ENCODE measurements at regions of chr3 and their contacts with region 1.

Region 1: GRCh38 chr3:153043729-153044328 is 118.2 kb upstream of the RAP2B start:
- DNase-seq: no peak
- ATAC-seq: peak in 1 of 8 donors; percentile 55
- H3K4me3 ChIP-seq: no peak overlapping the region
- H3K27ac ChIP-seq: peak overlapping the region in 1 of 10 donors; percentile 78
- H3K4me1 ChIP-seq: peaks cover 0 to 21% (median 4%) of the 10 kb centered on the region in 9 donors
- H3K27me3 ChIP-seq: no peaks in the 10 kb centered on the region
- CTCF ChIP-seq: no peak

Region 2: DNA sequence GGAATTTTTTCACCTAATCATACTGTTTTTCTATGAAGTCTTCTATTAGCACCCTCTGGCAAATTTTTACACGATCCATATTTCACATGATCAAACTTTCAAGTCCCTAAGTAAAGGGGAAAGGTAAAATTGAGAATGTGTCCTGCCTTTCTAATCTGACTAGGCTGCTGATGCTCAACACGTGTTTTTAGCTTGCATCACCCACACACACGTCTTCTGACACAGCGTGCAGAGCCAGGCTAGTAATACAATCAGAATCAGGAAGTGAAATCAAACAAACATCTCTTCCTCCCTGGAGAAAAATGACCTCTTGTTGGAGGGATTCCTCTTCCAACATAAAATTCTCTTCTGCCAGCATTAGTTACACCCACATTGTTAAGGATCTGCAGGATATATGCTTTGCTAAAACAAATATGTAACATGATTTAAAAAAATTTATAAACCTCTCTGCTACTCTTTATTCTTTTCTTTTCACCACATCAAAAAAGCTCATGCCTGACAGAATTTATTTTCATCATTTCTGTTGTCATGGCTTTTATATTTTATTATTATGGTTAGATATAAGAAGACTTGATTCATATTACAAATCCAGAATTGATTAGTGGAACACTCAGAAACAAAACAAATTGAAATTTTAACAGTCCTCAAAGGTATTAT is 240.6 kb after region 1 on chr3:
- intact Hi-C with region 1: loop called in 2 of 10 experiments (anchors 5 to 10 kb)
- DNase-seq: peak in 1 of 2 donors; percentile 56
- ATAC-seq: peak in 7 of 8 donors; percentile 80 to 92 (median 87)
- H3K4me3 ChIP-seq: no peak overlapping the region
- H3K27ac ChIP-seq: peak overlapping the region in 7 of 10 donors; percentile 6 to 83 (median 36)
- H3K4me1 ChIP-seq: peaks cover 0 to 36% (median 23%) of the 10 kb centered on the region in 9 donors
- H3K27me3 ChIP-seq: no peaks in the 10 kb centered on the region
- CTCF ChIP-seq: no peak

Region 3: DNA sequence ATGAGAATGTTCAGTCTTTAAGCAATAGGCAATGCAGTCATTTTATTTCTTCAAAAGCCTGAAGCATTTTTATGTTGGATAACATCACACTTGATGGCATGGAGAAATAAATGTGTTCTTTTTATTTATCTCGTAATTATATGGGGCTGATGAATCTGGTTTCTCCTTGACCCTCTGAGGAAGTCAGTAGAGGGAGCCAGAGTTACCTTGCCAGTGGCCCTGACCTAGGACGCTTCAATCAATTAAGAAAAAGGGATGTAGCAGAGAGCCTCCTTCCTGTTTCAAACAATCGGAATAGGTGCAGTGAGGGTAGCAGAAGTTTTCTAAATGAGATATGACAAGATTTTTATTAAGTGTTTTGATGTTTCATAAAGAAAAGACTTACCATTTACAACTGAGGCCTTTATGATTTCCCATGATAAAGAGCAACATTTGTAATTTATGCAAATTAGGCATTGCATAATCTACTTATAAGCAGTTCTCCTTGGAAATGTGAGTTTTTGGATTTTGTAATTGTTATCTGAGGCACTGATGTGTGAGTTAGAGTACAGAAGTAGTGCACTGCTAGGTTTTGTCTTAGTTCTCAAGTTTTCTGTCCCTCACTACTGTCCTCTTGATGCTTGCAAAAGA is 247.3 kb after region 1 on chr3:
- intact Hi-C with region 1: loop called in 6 of 10 experiments (anchors 5 to 10 kb)
- DNase-seq: no peak
- ATAC-seq: peak in 2 of 8 donors; percentile 61 to 79
- H3K4me3 ChIP-seq: no peak overlapping the region
- H3K27ac ChIP-seq: peak overlapping the region in 1 of 10 donors; percentile 7
- H3K4me1 ChIP-seq: peaks cover 0 to 44% (median 2%) of the 10 kb centered on the region in 9 donors
- H3K27me3 ChIP-seq: no peaks in the 10 kb centered on the region
- CTCF ChIP-seq: peak in 8 of 9 donors; percentile 7 to 62 (median 44)

Region 4: GRCh38 chr3:153330901-153331300 is 287.1 kb after region 1 on chr3:
- intact Hi-C with region 1: no loop called
- DNase-seq: no peak
- ATAC-seq: no peak
- H3K4me3 ChIP-seq: no peak overlapping the region
- H3K27ac ChIP-seq: no peak overlapping the region
- H3K4me1 ChIP-seq: no peaks in the 10 kb centered on the region
- H3K27me3 ChIP-seq: no peaks in the 10 kb centered on the region
- CTCF ChIP-seq: no peak

Region 5: GRCh38 chr3:153595186-153595815 is 551.5 kb after region 1 on chr3:
- intact Hi-C with region 1: loop called in 8 of 10 experiments (anchors 1 to 10 kb)
- DNase-seq: no peak
- ATAC-seq: peak in 4 of 8 donors; percentile 52 to 60 (median 58)
- H3K4me3 ChIP-seq: no peak overlapping the region
- H3K27ac ChIP-seq: no peak overlapping the region
- H3K4me1 ChIP-seq: peaks cover 0 to 12% (median 7%) of the 10 kb centered on the region in 9 donors
- H3K27me3 ChIP-seq: no peaks in the 10 kb centered on the region
- CTCF ChIP-seq: peak; percentile 16 to 71 (median 60)

Region 6: GRCh38 chr3:153768561-153769469 is 725.0 kb after region 1 on chr3:
- intact Hi-C with region 1: loop called (anchors 2 to 10 kb)
- DNase-seq: peak in 1 of 2 donors; percentile 22
- ATAC-seq: peak; percentile 57 to 89 (median 81)
- H3K4me3 ChIP-seq: no peak overlapping the region
- H3K27ac ChIP-seq: no peak overlapping the region
- H3K4me1 ChIP-seq: no peaks in the 10 kb centered on the region
- H3K27me3 ChIP-seq: no peaks in the 10 kb centered on the region
- CTCF ChIP-seq: peak; percentile 66 to 85 (median 79)

Region 7: DNA sequence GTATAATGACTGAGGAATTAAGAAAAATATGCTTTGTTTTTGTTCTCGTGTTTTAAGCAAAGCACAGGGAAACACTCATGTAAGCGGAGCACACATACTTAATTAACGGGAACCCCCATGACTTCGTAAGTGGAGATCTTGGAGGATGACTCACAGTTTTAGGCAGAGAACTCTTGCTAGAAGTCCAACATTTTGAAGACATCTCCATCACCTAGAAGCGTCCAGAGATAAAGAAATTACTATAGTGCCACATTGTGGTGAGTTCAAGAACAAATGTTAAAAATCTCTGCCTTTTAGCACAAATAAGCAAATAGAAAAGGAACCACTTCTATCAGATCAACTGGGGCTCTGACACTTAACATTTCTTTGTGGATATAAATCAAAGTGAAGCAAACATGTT is 883.3 kb after region 1 on chr3:
- intact Hi-C with region 1: loop called in 1 of 10 experiments (anchors 10 kb)
- DNase-seq: no peak
- ATAC-seq: peak in 1 of 8 donors; percentile 43
- H3K4me3 ChIP-seq: no peak overlapping the region
- H3K27ac ChIP-seq: no peak overlapping the region
- H3K4me1 ChIP-seq: no peaks in the 10 kb centered on the region
- H3K27me3 ChIP-seq: no peaks in the 10 kb centered on the region
- CTCF ChIP-seq: peak in 1 of 9 donors; percentile 23

Region 8: GRCh38 chr3:154252759-154253638 is 1209.2 kb after region 1 on chr3:
- intact Hi-C with region 1: loop called in 4 of 10 experiments (anchors 5 to 10 kb)
- DNase-seq: peak; percentile 88 to 89
- ATAC-seq: peak; percentile 77 to 97 (median 94)
- H3K4me3 ChIP-seq: peak overlapping the region in 2 of 10 donors; percentile 4 to 28
- H3K27ac ChIP-seq: no peak overlapping the region
- H3K4me1 ChIP-seq: peaks cover 0 to 13% (median 4%) of the 10 kb centered on the region in 9 donors
- H3K27me3 ChIP-seq: no peaks in the 10 kb centered on the region
- CTCF ChIP-seq: peak; percentile 83 to 98 (median 92)

Measured in heart right ventricle (tissue), 16 donors.